Pancreas (tissue), 10 donors: ENCODE measurements at regions of chr17 and their contacts with region 1.

Region 1: GRCh38 chr17:27741361-27741861 is 58.9 kb downstream of the NOS2 start:
- DNase-seq: no peak
- ATAC-seq: peak in 1 of 4 donors; percentile 43
- H3K4me3 ChIP-seq: no peak overlapping the region
- H3K27ac ChIP-seq: no peak overlapping the region
- H3K4me1 ChIP-seq: no peaks in the 10 kb centered on the region
- H3K27me3 ChIP-seq: no peaks in the 10 kb centered on the region
- CTCF ChIP-seq: no peak

Region 2: DNA sequence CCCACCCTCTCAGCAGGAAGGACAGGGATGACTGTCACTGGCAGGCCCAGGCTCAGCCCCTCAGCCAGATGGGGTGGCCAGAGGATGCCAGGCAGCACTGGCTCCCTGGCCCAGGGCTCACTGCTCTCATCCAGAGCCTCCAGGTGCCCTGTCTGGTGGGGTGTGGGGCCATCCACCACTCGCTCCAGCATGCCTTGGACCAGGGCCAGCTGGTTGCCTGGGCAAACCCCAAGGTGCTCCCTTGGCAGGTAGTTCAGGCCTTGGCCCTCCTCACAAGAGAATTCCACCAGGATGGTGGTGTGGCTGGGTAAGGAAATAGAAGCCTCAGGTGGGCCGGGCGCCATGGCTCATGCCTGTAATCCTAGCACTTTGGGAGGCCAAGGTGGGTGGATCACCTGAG is 81.0 kb before region 1 on chr17:
- intact Hi-C with region 1: loop called in 1 of 3 experiments (anchors 5 kb)
- DNase-seq: peak in 1 of 6 donors; percentile 60
- ATAC-seq: no peak
- H3K4me3 ChIP-seq: no peak overlapping the region
- H3K27ac ChIP-seq: no peak overlapping the region
- H3K4me1 ChIP-seq: no peaks in the 10 kb centered on the region
- H3K27me3 ChIP-seq: no peaks in the 10 kb centered on the region
- CTCF ChIP-seq: no peak